Stomach (tissue), 19 donors: ENCODE measurements at regions of chr10 and their contacts with region 1.

Region 1: DNA sequence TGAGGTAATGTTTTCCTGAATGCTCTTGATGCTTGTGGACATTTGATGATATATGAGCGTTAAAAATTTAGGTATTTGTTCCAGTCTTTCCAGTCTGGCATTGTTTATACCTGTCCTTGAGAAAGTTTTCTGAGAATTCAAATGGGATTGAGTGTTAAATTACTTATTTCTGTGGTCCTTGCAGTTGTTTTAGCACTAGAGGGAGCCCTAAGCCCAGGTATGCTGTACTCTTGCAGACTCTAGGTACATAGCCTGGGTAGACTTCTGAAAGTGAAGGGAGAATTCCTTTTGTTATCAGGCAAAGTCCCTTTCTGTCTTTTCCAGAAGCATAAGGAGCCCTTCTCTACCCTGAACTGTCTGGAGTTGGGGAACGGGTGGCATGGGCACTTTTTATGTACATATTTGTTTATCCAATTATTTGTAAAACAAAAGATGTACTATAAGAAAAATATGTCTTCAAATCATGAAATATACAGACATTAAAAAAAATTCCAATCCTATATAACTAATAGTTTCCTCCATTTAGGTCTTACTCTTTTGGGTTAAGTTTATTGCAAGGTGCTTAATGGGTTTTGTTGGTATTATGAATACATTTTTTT is 262.1 kb downstream of the ATRNL1 start:
- DNase-seq: peak in 1 of 2 donors; percentile 86
- H3K4me3 ChIP-seq: no peak overlapping the region
- H3K27ac ChIP-seq: no peak overlapping the region
- H3K4me1 ChIP-seq: no peaks in the 10 kb centered on the region
- H3K27me3 ChIP-seq: no peaks in the 10 kb centered on the region
- CTCF ChIP-seq: peak in 4 of 7 experiments; percentile 21 to 56 (median 38)
- EP300 ChIP-seq: no peak
- POLR2A ChIP-seq: no peak

Region 2: GRCh38 chr10:114869520-114869892 is 485.8 kb before region 1 on chr10:
- intact Hi-C with region 1: no loop called
- DNase-seq: peak in 1 of 2 donors; percentile 22
- H3K4me3 ChIP-seq: no peak overlapping the region
- H3K27ac ChIP-seq: no peak overlapping the region
- H3K4me1 ChIP-seq: peaks cover 0 to under 1% (median 0%) of the 10 kb centered on the region in 4 donors
- H3K27me3 ChIP-seq: no peaks in the 10 kb centered on the region
- CTCF ChIP-seq: no peak
- EP300 ChIP-seq: no peak
- POLR2A ChIP-seq: no peak

Region 3: DNA sequence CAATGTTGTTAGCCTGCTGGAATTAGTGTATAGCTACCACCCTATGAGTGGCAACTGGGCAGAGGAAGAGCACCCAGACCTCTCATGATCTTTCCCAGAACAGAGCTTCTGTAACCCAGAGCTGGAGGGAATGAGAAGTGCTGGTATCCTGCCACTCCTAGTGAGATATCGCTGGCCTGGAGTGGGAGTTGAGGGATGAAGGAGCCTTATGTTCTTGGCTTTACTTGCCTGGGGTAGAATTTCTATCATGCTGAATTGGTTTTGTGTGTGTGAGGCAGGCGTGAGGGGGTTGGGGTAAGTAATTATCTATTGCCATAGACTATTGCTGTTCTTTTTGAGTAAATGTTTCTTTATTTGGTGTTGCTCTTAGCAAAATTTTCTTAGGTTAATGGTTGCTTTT is 115.5 kb before region 1 on chr10:
- intact Hi-C with region 1: no loop called
- DNase-seq: no peak
- H3K4me3 ChIP-seq: no peak overlapping the region
- H3K27ac ChIP-seq: no peak overlapping the region
- H3K4me1 ChIP-seq: no peaks in the 10 kb centered on the region
- H3K27me3 ChIP-seq: no peaks in the 10 kb centered on the region
- CTCF ChIP-seq: no peak
- EP300 ChIP-seq: no peak
- POLR2A ChIP-seq: no peak

Region 4: GRCh38 chr10:116385994-116386809 is 1030.9 kb after region 1 on chr10:
- intact Hi-C with region 1: loop called (anchors 10 kb)
- DNase-seq: peak in 1 of 2 donors; percentile 66
- H3K4me3 ChIP-seq: no peak overlapping the region
- H3K27ac ChIP-seq: no peak overlapping the region
- H3K4me1 ChIP-seq: no peaks in the 10 kb centered on the region
- H3K27me3 ChIP-seq: no peaks in the 10 kb centered on the region
- CTCF ChIP-seq: peak in 3 of 7 experiments; percentile 25 to 39 (median 36)
- EP300 ChIP-seq: no peak
- POLR2A ChIP-seq: no peak